ENCODE measurements at regions of chr17 and their contacts with region 1.

Region 1: DNA sequence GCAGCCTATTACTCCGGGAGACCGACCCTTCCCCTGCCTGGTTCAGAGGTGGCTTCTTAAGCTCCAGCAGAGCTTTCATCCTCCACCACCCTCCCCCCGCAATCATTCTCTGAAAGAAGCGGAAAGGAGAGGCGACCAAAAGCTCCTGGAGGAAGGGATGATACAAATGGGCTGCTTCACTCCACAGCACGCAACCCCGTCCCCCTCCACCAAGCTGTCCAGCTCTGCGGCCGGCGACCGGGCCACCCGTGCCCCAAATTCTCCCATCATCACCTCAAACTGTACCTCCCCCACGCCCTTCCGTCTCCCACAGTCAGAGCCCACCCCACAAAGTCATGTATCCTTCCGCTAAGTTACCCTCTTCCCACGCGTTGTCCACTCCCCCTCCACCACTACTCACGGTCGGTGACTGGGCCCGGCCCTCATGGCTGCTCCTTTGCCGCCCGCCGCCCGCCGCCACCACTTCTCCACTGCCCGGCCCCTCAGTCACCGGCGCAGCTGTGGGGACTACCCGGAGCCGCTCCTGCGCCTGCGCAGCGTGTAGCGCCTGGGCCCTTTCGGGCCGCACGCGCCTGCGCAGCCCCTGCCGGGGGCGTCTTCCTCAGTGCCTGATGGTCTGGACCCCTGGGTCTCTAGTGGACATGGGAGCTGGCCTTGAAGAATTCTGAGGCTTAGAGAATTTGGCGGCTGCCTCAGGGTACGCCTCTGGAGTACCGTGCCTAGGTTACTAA is at the start of gene FAM222B:
- DNase-seq: peak; percentile 79
- ATAC-seq: peak; percentile 98
- H3K4me3 ChIP-seq: peak within 1 kb of the TSS; percentile 73 to 92 (median 74)
- H3K27ac ChIP-seq: peak within 1 kb of the TSS; percentile 59
- H3K4me1 ChIP-seq: peaks cover 20% of the 10 kb centered on the region
- H3K27me3 ChIP-seq: no peaks in the 10 kb centered on the region; a peak in 1 of 5 replicates
- CTCF ChIP-seq: no peak
- EP300 ChIP-seq: no peak
- POLR2A ChIP-seq: peak; percentile 58 to 79
- RAD21 ChIP-seq: no peak
- total RNA-seq, gene FAM222B: 3.5 and 4.7 TPM in 2 replicates

Region 2: DNA sequence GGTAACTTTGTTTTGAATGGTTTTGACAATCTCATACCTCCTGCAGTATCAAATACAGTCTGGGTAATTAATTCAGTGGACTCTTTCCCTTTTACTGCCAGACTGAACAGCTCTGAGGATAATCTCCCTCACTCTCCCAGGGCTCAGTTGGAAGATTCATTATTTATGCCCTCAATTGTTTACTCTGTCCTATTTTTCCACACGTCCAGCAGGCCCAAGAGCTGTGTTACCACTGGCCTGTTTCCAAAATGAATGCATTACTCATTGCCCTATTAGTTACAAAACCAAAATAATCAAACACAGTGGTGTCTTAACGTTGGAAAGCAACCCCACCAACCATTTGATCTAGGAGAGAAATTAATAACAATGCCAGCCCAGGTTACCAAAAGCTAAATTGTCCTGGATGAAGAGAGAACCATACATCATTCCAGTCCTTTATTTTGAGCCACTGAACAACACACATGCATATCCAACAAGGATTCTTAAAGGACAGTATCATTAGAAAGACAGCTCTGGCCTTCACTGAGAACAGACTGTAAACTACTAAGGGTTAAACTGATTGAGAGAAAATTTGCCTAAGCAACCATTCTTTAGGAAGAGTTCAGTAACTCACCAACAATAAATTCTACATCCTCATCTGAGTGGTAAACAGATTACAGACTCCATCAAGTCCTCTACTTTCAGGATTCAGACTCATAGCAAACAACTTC is 34.4 kb before region 1 on chr17:
- CTCF ChIA-PET with region 1: no interaction called
- POLR2A ChIA-PET with region 1: interaction called, 14 read pairs
- in situ Hi-C with region 1: no loop called
- intact Hi-C with region 1: loop called (anchors 5 kb)
- DNase-seq: peak; percentile 68
- ATAC-seq: no peak
- H3K4me3 ChIP-seq: peak overlapping the region; percentile 4 to 25 (median 7); a peak in 3 of 6 replicates
- H3K27ac ChIP-seq: peak overlapping the region; percentile 62
- H3K4me1 ChIP-seq: peaks cover 72% of the 10 kb centered on the region
- H3K27me3 ChIP-seq: no peaks in the 10 kb centered on the region
- CTCF ChIP-seq: no peak
- EP300 ChIP-seq: no peak
- POLR2A ChIP-seq: no peak
- RAD21 ChIP-seq: no peak

Region 3: GRCh38 chr17:28908640-28909167 is 66.3 kb after region 1 on chr17:
- CTCF ChIA-PET with region 1: no interaction called
- POLR2A ChIA-PET with region 1: no interaction called
- in situ Hi-C with region 1: no loop called
- intact Hi-C with region 1: loop called (anchors 2 kb)
- DNase-seq: peak; percentile 86
- ATAC-seq: peak; percentile 80
- H3K4me3 ChIP-seq: no peak overlapping the region; a peak in 1 of 6 replicates
- H3K27ac ChIP-seq: peak overlapping the region; percentile 70
- H3K4me1 ChIP-seq: peaks cover 63% of the 10 kb centered on the region
- H3K27me3 ChIP-seq: no peaks in the 10 kb centered on the region
- CTCF ChIP-seq: 0 out of 2 replicates have a peak, but pooled peaks have one; percentile 5
- EP300 ChIP-seq: no peak
- POLR2A ChIP-seq: no peak
- RAD21 ChIP-seq: no peak

Measured in HepG2 (cell line).